PC-9 (cell line): ENCODE measurements at regions of chr2 and their contacts with region 1.

Region 1: DNA sequence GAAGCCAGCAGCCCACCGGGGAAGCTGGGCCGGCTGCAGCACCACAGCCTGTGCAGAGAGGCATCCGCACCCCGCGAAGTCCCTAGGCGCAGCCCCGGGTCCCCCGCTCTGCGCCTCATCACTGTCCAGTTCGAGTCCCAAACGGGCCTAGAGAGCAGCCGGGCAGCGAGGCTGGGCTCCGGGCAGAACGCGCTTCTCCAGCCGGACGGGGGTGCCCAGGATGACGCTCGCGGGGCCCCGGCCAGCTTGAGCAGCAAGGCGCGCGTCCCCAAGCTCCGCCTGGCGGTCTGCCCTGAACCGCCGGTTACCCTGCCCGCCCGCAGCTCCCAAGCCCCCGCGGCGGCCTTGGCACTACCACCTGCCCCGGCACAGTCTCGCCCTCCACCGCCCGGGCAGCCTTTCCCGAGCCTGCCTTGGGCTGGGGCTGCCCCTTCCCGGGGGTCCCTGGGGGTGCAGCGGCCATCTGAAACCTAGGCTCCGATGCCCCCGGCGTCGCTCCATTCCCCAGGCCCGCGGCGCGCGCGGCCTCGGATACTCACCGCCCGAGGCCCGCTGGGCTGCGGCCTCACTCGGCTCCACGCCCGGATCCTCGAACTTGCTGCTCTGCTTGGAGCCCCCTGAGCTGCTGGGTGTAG is 591 bp downstream of the SLC16A14 start:
- DNase-seq: peak in 1 of 2 experiments; percentile 42
- H3K4me3 ChIP-seq: peak overlapping the region; percentile 77
- H3K27ac ChIP-seq: no peak overlapping the region
- H3K4me1 ChIP-seq: no peaks in the 10 kb centered on the region
- H3K27me3 ChIP-seq: no peaks in the 10 kb centered on the region
- CTCF ChIP-seq: 0 out of 2 replicates have a peak, but pooled peaks have one; percentile 23

Region 2: GRCh38 chr2:229780856-229781773 is 287.0 kb before region 1 on chr2:
- CTCF ChIA-PET with region 1: no interaction called
- POLR2A ChIA-PET with region 1: no interaction called
- intact Hi-C with region 1: loop called (anchors 5 kb)
- DNase-seq: peak; percentile 1 to 61
- H3K4me3 ChIP-seq: no peak overlapping the region
- H3K27ac ChIP-seq: peak overlapping the region; percentile 33
- H3K4me1 ChIP-seq: peaks cover 10% of the 10 kb centered on the region
- H3K27me3 ChIP-seq: no peaks in the 10 kb centered on the region
- CTCF ChIP-seq: peak; percentile 94

Region 3: DNA sequence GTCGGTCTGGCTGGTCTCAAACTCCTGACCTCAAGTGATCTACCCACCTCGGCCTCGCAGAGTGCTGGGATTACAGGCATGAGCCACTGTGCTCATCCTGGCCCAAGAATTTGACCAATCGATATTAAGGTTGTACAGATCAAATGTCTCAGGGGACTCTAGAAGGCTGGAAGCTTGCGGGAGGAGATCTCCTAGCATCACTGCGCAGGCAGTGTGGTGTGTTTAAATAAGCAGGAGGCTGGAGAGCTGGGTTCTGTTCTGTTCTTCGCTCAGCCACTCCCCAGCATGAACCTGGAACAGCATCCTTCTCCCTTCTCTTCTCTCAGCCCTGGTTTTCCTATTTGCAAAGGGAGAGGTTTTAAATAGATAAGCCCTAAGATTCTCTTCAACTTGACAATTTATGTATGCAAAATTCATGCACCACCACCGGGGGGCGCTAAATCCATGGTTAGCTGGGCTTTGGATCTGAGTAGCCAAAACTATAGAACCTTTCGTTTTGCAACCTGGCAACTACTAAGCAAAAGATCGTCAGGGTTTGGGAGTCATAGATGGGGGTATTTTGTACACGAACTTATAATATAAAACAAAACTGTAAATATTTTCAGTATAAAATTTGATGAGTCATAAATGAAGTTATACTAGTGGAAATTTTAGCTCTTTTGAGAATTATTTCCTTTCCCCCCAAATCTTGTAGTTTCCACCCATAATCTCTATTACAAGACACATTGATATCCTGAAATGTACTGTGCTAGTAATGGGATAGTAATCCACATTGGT is 60.0 kb before region 1 on chr2:
- CTCF ChIA-PET with region 1: interaction called, 8 read pairs
- POLR2A ChIA-PET with region 1: no interaction called
- intact Hi-C with region 1: loop called (anchors 2 kb)
- DNase-seq: peak; percentile 42 to 71
- H3K4me3 ChIP-seq: no peak overlapping the region
- H3K27ac ChIP-seq: no peak overlapping the region
- H3K4me1 ChIP-seq: peaks cover 7% of the 10 kb centered on the region
- H3K27me3 ChIP-seq: no peaks in the 10 kb centered on the region
- CTCF ChIP-seq: peak; percentile 94

Region 4: DNA sequence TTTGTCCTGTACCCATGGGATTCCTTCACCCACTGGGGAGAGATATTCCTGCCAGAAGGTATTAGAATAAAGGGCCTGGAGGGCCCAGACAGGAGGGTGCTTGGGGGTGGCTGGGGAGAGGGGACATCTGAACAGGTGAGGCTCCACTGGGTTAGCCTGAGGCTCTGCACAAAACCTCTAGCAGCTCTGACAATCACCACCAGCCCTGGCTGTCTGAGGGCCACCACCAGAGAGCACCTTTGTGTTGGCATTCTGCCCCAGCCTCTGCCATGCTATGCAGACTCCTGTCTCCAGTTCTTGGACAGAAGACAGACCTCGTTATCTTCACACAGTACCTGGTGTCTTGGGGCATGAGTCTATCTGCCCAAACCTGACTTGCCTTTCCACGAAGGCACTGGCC is 24.7 kb before region 1 on chr2:
- CTCF ChIA-PET with region 1: no interaction called
- POLR2A ChIA-PET with region 1: no interaction called
- intact Hi-C with region 1: no loop called
- DNase-seq: no peak
- H3K4me3 ChIP-seq: no peak overlapping the region
- H3K27ac ChIP-seq: no peak overlapping the region
- H3K4me1 ChIP-seq: no peaks in the 10 kb centered on the region
- H3K27me3 ChIP-seq: no peaks in the 10 kb centered on the region
- CTCF ChIP-seq: no peak